Heart right ventricle (tissue), 16 donors: ENCODE measurements at regions of chr1 and their contacts with region 1.

Region 1: DNA sequence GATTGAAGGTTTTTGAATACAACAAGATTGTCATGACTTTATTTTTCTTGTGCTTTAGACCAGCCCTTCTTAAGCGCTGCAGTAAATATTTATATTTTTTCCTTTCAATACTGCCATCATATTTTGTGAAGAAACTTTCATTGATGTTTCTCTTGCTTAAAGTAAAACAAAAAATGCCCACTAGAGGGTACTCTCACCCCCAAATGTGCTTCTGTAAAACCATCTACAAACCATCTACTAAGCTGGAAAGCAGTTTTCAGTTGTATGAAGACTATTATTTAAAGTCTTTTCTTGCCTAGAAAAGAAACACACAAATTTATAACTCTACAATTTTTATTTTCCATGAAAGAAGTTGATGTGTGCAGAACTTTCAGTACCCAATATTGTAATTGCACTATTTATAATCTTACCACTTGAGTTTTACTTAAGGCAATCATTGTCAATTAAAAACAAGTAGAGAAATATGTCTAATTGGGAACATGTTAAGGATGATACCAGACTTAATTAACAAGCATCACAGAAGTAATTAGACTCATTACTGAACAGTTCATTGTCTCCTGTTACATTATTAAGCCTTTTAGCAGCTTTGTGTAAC is 10.7 kb downstream of the LEPR start:
- DNase-seq: no peak
- ATAC-seq: peak in 2 of 8 donors; percentile 51 to 57
- H3K4me3 ChIP-seq: no peak overlapping the region
- H3K27ac ChIP-seq: peak overlapping the region in 7 of 10 donors; percentile 5 to 84 (median 65)
- H3K4me1 ChIP-seq: peaks cover 0 to 40% (median 17%) of the 10 kb centered on the region in 9 donors
- H3K27me3 ChIP-seq: no peaks in the 10 kb centered on the region
- CTCF ChIP-seq: peak; percentile 33 to 77 (median 64)

Region 2: GRCh38 chr1:65525266-65526048 is 94.2 kb after region 1 on chr1:
- intact Hi-C with region 1: loop called in 1 of 10 experiments (anchors 5 kb)
- DNase-seq: peak in 1 of 2 donors; percentile 21
- ATAC-seq: peak in 7 of 8 donors; percentile 33 to 64 (median 46)
- H3K4me3 ChIP-seq: peak overlapping the region; percentile 53 to 70 (median 60)
- H3K27ac ChIP-seq: peak overlapping the region in 6 of 10 donors; percentile 42 to 51 (median 46)
- H3K4me1 ChIP-seq: peaks cover 0 to 35% (median 13%) of the 10 kb centered on the region in 9 donors
- H3K27me3 ChIP-seq: peaks cover 0 to 46% (median 21%) of the 10 kb centered on the region in 7 donors
- CTCF ChIP-seq: no peak

Region 3: GRCh38 chr1:65581119-65581518 is 149.9 kb after region 1 on chr1:
- intact Hi-C with region 1: loop called in 2 of 10 experiments (anchors 5 to 10 kb)
- DNase-seq: no peak
- ATAC-seq: no peak
- H3K4me3 ChIP-seq: no peak overlapping the region
- H3K27ac ChIP-seq: no peak overlapping the region
- H3K4me1 ChIP-seq: no peaks in the 10 kb centered on the region
- H3K27me3 ChIP-seq: no peaks in the 10 kb centered on the region
- CTCF ChIP-seq: peak in 7 of 9 donors; percentile 12 to 54 (median 26)

Region 4: GRCh38 chr1:65640046-65640445 is 208.8 kb after region 1 on chr1:
- intact Hi-C with region 1: no loop called
- DNase-seq: no peak
- ATAC-seq: no peak
- H3K4me3 ChIP-seq: no peak overlapping the region
- H3K27ac ChIP-seq: no peak overlapping the region
- H3K4me1 ChIP-seq: no peaks in the 10 kb centered on the region
- H3K27me3 ChIP-seq: no peaks in the 10 kb centered on the region
- CTCF ChIP-seq: no peak

Region 5: DNA sequence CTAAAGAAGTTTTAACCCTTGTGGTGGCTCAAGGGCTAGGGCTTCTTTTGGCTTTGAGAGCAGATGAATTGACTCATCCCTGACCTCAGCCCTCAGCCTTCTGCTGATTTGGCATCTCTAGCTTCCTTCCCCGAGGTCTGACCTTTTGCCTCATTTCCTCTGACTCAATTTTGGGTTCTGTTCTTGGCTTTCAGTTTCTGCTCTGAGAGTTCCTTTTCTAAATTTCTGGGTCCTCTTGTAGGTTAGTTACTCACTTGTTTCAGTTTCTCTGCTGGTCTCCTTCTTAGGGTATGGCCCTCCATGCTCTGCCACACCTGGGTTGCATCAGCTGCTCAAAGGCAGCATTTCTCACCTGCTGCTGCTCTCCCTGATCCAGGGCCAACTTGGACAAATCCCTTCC is 380.9 kb after region 1 on chr1:
- intact Hi-C with region 1: no loop called
- DNase-seq: peak in 1 of 2 donors; percentile 28
- ATAC-seq: peak in 7 of 8 donors; percentile 51 to 90 (median 72)
- H3K4me3 ChIP-seq: no peak overlapping the region
- H3K27ac ChIP-seq: peak overlapping the region in 1 of 10 donors; percentile 83
- H3K4me1 ChIP-seq: peaks cover 0 to 22% (median 0%) of the 10 kb centered on the region in 9 donors
- H3K27me3 ChIP-seq: peaks cover 0 to 7% (median 0%) of the 10 kb centered on the region in 7 donors
- CTCF ChIP-seq: no peak